PC-9 (cell line): ENCODE measurements at regions of chr5 and their contacts with region 1.

Region 1: GRCh38 chr5:107673368-107674136 is 2.8 kb upstream of the EFNA5 start:
- DNase-seq: peak; percentile 84 to 88
- H3K4me3 ChIP-seq: peak overlapping the region; percentile 72
- H3K27ac ChIP-seq: peak overlapping the region; percentile 90
- H3K4me1 ChIP-seq: peaks cover 17% of the 10 kb centered on the region
- H3K27me3 ChIP-seq: no peaks in the 10 kb centered on the region
- CTCF ChIP-seq: peak; percentile 95

Region 2: DNA sequence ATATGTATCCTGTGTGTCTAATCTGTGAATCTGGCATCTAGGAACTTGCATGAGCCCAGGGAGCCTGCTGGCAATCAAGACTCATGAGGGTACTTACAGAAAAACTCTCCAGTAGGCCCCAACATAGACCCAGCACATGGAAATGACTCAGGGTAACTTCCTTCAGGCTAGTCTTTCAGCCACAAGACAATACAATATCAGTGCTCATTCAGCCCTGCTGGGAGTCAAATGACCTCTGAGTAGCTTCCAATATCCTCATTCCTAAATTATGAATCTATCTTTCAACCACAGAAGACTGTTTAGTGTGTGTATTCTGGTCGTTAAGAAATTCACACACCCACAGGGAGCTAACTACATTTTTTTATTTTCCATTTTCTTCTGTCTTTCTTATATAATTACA is 1275.9 kb before region 1 on chr5:
- CTCF ChIA-PET with region 1: no interaction called
- POLR2A ChIA-PET with region 1: no interaction called
- intact Hi-C with region 1: loop called (anchors 5 kb)
- DNase-seq: peak; percentile 66 to 95
- H3K4me3 ChIP-seq: no peak overlapping the region
- H3K27ac ChIP-seq: peak overlapping the region; percentile 89
- H3K4me1 ChIP-seq: peaks cover 41% of the 10 kb centered on the region
- H3K27me3 ChIP-seq: no peaks in the 10 kb centered on the region
- CTCF ChIP-seq: no peak

Region 3: GRCh38 chr5:107104040-107104995 is 569.2 kb before region 1 on chr5:
- CTCF ChIA-PET with region 1: no interaction called
- POLR2A ChIA-PET with region 1: no interaction called
- intact Hi-C with region 1: loop called (anchors 1 kb)
- DNase-seq: peak in 1 of 2 experiments; percentile 2
- H3K4me3 ChIP-seq: no peak overlapping the region
- H3K27ac ChIP-seq: no peak overlapping the region
- H3K4me1 ChIP-seq: no peaks in the 10 kb centered on the region; the same call in 1 of the 2 replicates
- H3K27me3 ChIP-seq: no peaks in the 10 kb centered on the region
- CTCF ChIP-seq: peak; percentile 47

Region 4: GRCh38 chr5:107425541-107426256 is 247.9 kb before region 1 on chr5:
- CTCF ChIA-PET with region 1: no interaction called
- POLR2A ChIA-PET with region 1: interaction called, 3 read pairs
- intact Hi-C with region 1: loop called (anchors 1 kb)
- DNase-seq: peak; percentile 43 to 89
- H3K4me3 ChIP-seq: no peak overlapping the region; the same call in 1 of the 2 replicates
- H3K27ac ChIP-seq: peak overlapping the region; percentile 85
- H3K4me1 ChIP-seq: peaks cover 68% of the 10 kb centered on the region
- H3K27me3 ChIP-seq: no peaks in the 10 kb centered on the region
- CTCF ChIP-seq: no peak

Region 5: GRCh38 chr5:107519900-107520354 is 153.6 kb before region 1 on chr5:
- CTCF ChIA-PET with region 1: no interaction called
- POLR2A ChIA-PET with region 1: no interaction called
- intact Hi-C with region 1: loop called (anchors 1 kb)
- DNase-seq: peak; percentile 36 to 38
- H3K4me3 ChIP-seq: no peak overlapping the region
- H3K27ac ChIP-seq: no peak overlapping the region; the same call in 1 of the 2 replicates
- H3K4me1 ChIP-seq: peaks cover 3% of the 10 kb centered on the region; the same call in 1 of the 2 replicates
- H3K27me3 ChIP-seq: no peaks in the 10 kb centered on the region
- CTCF ChIP-seq: no peak

Region 6: GRCh38 chr5:108345541-108346171 is 672.1 kb after region 1 on chr5:
- CTCF ChIA-PET with region 1: no interaction called
- POLR2A ChIA-PET with region 1: no interaction called
- intact Hi-C with region 1: loop called (anchors 5 kb)
- DNase-seq: peak in 1 of 2 experiments; percentile 51
- H3K4me3 ChIP-seq: no peak overlapping the region
- H3K27ac ChIP-seq: no peak overlapping the region
- H3K4me1 ChIP-seq: no peaks in the 10 kb centered on the region
- H3K27me3 ChIP-seq: no peaks in the 10 kb centered on the region
- CTCF ChIP-seq: peak; percentile 70